Lower leg skin (tissue), 4 donors: ENCODE measurements at regions of chr10 and their contacts with region 1.

Region 1: GRCh38 chr10:17430647-17431355 is 23.6 kb downstream of the ST8SIA6 start:
- DNase-seq: peak; percentile 60 to 90
- H3K4me3 ChIP-seq: no peak overlapping the region
- CTCF ChIP-seq: peak in 1 of 3 donors; percentile 36
- POLR2A ChIP-seq: no peak

Region 2: GRCh38 chr10:17290226-17290625 is 140.6 kb before region 1 on chr10:
- intact Hi-C with region 1: loop called (anchors 10 kb)
- DNase-seq: no peak
- H3K4me3 ChIP-seq: no peak overlapping the region
- CTCF ChIP-seq: no peak
- POLR2A ChIP-seq: no peak

Region 3: GRCh38 chr10:18767981-18768380 is 1337.2 kb after region 1 on chr10:
- intact Hi-C with region 1: no loop called
- DNase-seq: no peak
- H3K4me3 ChIP-seq: no peak overlapping the region
- CTCF ChIP-seq: no peak
- POLR2A ChIP-seq: no peak